Activated naive CD8-positive, alpha-beta T cell treated with anti-CD3 and anti-CD28 coated beads, Interleukin-2, amount 10 ng/mL, durations not matched to agents 7 days and 5 days (primary cell): ENCODE measurements at regions of chr14 and their contacts with region 1.

Region 1: DNA sequence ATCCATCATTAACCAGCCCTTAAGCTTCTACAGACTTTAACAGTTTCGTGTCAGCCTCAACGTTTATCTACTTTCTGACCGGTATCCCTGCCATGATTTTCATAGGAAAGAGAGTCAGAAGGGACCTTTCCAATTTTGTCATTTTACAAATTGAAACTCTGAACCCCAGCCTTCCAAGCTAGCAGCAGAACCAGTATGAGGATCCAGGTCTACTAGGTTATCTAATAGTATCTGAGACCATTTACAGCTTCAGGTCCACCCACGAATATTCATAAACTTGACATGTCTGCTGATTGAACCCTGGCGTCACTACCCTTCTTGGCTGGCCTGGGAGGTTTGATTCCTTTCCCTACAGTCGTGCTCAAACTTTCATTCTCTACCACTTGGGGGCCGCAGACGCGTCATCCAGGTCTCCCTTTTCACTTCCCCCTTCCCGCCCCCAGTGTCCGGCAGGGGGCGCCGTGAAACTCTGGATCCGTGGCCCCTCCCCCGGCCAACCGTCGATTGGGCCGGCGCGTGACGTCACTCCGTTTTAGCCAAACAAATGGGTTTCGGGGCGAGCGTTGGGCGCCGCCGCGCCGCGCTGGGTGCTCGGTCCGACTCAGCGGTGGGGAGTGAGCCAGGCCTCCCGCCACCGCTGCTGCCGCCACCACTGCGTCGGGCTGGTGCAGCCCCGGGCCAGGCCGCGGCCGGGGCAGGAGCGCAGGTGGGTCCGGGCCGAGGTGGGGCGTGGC is at the start of gene FBXO34:
- DNase-seq: peak; percentile 100
- ATAC-seq: peak; percentile 91
- H3K4me3 Mint-ChIP-seq: peak within 1 kb of the TSS; percentile 91
- H3K27ac Mint-ChIP-seq: peak within 1 kb of the TSS; percentile 93
- H3K4me1 Mint-ChIP-seq: peaks cover 28% of the 10 kb centered on the region
- H3K27me3 Mint-ChIP-seq: no peaks in the 10 kb centered on the region
- total RNA-seq, gene FBXO34: 26.1 to 27.0 TPM

Region 2: DNA sequence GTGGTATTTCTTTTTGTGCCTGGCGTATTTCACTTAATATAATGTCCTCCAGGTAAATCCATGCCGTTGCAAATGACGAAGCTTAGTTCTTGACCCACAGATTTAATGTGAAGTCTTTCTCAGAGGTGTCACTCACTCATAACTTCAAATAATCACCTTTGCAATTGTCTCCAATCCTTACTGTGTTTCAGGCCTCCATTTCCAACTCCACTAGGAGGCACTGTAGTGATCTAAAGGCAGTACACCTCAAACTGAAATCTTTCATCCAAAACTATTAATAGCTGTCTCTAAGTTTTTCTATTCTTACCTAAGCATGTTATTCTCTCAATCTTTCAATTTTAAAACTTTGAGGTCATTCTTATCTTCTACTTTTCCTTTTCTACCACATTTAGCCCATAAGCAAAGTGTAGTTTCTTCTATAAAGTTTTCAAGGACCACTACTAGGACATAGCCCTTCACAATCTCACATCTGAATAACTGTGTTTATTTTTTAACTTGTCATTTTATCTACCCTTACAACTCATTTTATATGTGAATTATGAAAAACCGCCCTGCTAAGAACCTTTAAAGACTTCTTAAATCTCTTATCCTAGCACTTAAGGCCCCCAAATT is 25.2 kb before region 1 on chr14:
- POLR2A ChIA-PET with region 1: no interaction called
- DNase-seq: no peak
- ATAC-seq: no peak
- H3K4me3 Mint-ChIP-seq: no peak overlapping the region
- H3K27ac Mint-ChIP-seq: no peak overlapping the region
- H3K4me1 Mint-ChIP-seq: no peaks in the 10 kb centered on the region
- H3K27me3 Mint-ChIP-seq: peaks cover 30% of the 10 kb centered on the region

Region 3: DNA sequence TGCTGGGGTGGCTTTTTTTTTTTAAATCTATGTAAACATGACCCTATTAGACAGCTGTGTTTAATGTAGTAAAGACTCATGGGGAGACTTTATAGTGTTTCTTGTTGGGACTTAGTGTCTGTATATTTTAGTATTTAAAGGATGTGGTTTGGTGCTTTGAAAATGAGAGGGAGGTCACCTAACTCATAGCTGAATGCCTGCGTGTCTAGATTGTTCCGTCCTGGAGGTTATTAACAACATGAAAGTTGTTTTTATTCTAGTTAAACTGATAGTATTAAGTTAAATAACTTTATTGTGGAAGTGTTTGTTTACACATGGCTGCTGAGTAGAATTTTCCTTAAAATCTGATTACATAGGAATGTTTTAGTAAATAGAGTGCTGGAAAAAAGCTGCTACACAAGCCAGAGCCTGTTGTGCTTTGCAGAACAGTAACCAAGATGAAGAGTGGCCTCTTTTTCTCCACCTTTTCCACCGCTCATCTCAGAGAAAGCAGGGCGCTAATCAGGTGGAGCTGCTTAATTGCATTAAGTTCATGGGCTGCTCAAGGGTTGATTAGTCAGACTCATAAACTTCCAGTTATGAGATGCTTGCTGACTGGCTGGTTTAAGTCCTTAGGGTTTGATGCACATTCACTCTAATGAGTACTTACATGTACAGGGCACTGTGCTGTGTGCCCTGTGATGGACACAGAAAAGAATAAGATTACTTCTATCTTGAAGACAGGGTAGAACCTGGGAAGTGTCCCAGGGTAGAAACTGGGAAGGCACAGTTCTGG is 62.9 kb after region 1 on chr14:
- POLR2A ChIA-PET with region 1: interaction called, 11 read pairs
- DNase-seq: no peak
- ATAC-seq: peak; percentile 61
- H3K4me3 Mint-ChIP-seq: peak overlapping the region; percentile 57
- H3K27ac Mint-ChIP-seq: peak overlapping the region; percentile 81
- H3K4me1 Mint-ChIP-seq: peaks cover 46% of the 10 kb centered on the region
- H3K27me3 Mint-ChIP-seq: no peaks in the 10 kb centered on the region

Region 4: GRCh38 chr14:55366271-55366670 is 95.3 kb after region 1 on chr14:
- POLR2A ChIA-PET with region 1: no interaction called
- DNase-seq: no peak
- ATAC-seq: no peak
- H3K4me3 Mint-ChIP-seq: no peak overlapping the region
- H3K27ac Mint-ChIP-seq: no peak overlapping the region
- H3K4me1 Mint-ChIP-seq: no peaks in the 10 kb centered on the region
- H3K27me3 Mint-ChIP-seq: no peaks in the 10 kb centered on the region